ENCODE measurements at regions of chr10 and their contacts with region 1.

Region 1: DNA sequence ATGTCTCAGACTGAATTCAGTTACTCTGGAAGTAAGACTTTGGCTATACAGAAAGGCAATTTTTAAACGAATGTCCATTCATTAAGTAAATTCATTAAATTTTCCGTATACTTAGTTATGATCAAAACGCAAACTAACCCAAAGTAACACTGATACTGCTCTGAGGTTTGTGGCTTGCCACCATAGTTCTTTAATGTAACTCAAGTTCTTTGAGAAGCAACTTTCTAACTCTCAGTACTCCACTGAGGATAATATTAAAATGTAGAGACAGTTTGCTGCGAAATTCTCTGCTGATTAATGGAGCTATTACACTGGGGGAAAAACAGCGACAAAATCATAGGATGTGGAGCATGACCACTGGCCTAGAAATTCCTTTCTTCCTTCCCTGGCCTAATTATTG is 45.4 kb upstream of the PNLIPRP3 start:
- DNase-seq: no peak
- ATAC-seq: no peak

Region 2: DNA sequence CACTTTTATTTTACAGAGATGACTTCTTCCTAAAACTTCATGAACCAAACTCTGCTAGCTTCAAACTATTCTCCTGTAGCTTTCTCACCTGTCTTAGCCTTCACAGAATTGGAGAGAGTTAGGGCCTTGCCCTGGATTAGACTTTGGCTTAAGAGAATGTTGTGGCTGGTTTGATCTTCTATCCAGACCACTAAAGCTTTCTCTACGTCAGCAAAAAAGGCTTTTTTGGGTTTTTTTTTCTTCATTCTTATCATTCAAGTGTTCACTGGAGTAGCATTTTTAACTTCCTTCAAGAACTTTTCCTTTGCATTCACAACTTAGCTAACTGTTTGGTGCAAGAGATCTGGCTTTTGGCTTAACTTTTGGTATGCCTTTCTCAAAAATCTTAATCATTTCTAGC is 77.4 kb before region 1 on chr10:
- intact Hi-C with region 1: loop called (anchors 2 kb)
- DNase-seq: no peak
- ATAC-seq: no peak

Region 3: DNA sequence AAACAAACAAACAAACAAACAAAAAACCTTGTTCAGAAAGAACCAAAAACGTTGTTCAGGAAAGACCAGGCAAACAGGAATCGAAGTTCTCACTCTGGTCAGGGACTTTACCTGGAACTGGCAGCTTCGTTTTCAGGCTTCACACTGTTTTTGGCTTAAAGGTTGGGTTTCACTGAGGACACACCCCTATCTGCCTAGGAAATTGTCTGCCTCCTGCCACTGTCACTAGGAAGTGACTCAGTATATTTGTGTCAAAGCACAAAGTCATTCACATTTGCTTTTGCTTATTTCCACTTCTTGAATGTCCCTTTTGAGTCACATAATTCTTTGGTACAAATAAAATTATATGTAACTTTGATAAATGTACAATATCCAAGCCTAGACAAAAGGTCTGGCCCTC is 83.3 kb after region 1 on chr10:
- intact Hi-C with region 1: no loop called
- DNase-seq: no peak
- ATAC-seq: no peak

Measured in sciatic nerve (tissue), 2 donors.